ENCODE measurements at regions of chr14 and their contacts with region 1.

Region 1: DNA sequence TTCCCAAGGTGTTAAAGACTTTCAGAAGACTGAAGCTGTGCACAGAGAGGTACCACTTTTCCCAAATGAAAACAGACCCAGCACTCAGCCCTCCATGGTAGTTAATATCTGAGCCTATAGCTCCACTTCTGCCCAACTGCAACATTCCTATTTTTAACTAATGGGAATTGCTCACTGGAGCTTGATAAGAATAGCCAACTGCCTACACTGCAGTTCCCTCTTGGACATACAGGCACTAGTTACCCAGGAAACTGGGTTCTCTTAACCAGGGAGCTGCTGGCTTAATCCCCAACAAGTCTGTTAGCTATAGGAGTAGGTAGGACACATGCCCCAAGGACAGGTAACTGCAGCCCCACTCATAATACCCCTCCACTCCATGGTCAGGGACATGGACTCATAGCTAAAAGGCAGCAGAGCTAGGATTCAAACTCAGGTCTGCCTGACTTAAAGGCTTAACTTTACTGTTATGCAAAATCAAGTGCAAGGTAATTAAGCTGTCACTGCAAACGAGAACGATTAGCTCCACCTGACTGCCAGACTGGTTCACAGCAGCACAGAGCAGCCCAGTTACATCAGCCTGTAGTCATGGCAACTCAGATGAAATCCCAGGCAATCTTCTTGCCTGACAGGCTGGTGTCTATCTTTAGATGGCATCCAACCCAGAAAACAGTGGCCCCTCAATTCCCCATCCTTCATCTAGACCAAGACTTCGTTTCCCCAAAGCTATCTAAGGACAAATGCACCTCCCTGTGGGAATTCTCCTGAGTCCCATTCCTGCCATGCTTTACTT is 77.1 kb upstream of the ACTN1 start:
- DNase-seq: peak; percentile 49
- ATAC-seq: peak; percentile 92
- H3K4me3 Mint-ChIP-seq: no peak overlapping the region
- H3K27ac Mint-ChIP-seq: peak overlapping the region; percentile 54; the same call in 1 of the 2 replicates
- H3K4me1 Mint-ChIP-seq: peaks cover 21% of the 10 kb centered on the region
- H3K27me3 Mint-ChIP-seq: no peaks in the 10 kb centered on the region
- CTCF ChIP-seq: no peak

Region 2: DNA sequence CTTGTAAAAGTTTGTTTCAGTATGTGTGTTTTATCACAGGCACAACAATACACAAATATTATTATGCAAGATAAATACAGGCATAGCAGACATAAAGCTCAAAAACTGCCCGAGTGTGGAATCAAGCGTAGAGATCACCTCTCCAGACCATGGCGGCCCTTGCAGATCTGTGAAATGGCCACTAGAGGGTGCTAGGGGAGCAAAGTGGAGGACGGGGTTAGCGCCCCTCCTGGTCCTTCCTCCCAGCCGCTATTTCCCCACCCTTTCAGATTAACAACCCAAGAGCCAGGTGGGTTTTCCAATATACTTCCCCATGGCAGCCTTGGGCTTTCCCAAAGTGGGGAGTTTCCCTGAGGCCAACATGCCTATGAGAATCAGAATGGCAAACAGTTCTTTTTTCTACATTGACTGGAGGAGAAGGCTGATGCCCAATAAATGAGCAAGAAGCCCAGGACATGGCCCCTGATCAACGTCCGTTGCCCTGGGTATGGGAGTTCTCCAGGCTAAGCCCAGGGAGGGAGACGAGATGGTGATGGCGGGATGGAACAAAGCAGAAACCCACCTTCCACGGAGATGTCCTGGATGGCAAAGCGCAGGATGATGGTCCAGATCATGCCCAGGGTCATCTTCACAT is 144.5 kb before region 1 on chr14:
- CTCF ChIA-PET with region 1: interaction called, 17 read pairs
- POLR2A ChIA-PET with region 1: no interaction called
- DNase-seq: peak; percentile 89
- ATAC-seq: peak; percentile 94
- H3K4me3 Mint-ChIP-seq: no peak overlapping the region
- H3K27ac Mint-ChIP-seq: peak overlapping the region; percentile 60; the same call in 1 of the 2 replicates
- H3K4me1 Mint-ChIP-seq: no peaks in the 10 kb centered on the region; the same call in 1 of the 2 replicates
- H3K27me3 Mint-ChIP-seq: no peaks in the 10 kb centered on the region
- CTCF ChIP-seq: peak; percentile 99

Region 3: GRCh38 chr14:68979021-68979782 is 77.0 kb before region 1 on chr14 and contains the start of gene ACTN1:
- CTCF ChIA-PET with region 1: interaction called, 11 read pairs
- POLR2A ChIA-PET with region 1: interaction called, 3 read pairs
- DNase-seq: peak; percentile 92
- ATAC-seq: peak; percentile 78
- H3K4me3 Mint-ChIP-seq: peak within 1 kb of the TSS; percentile 90
- H3K27ac Mint-ChIP-seq: peak within 1 kb of the TSS; percentile 99
- H3K4me1 Mint-ChIP-seq: peaks cover 47% of the 10 kb centered on the region
- H3K27me3 Mint-ChIP-seq: peaks cover 7% of the 10 kb centered on the region
- CTCF ChIP-seq: no peak
- total RNA-seq, gene ACTN1: 196 to 198 TPM (median 197 TPM) in 3 replicates

Region 4: GRCh38 chr14:69090187-69090789 is 34.1 kb after region 1 on chr14:
- CTCF ChIA-PET with region 1: interaction called, 12 read pairs
- POLR2A ChIA-PET with region 1: no interaction called
- DNase-seq: peak; percentile 27
- ATAC-seq: peak; percentile 78
- H3K4me3 Mint-ChIP-seq: no peak overlapping the region
- H3K27ac Mint-ChIP-seq: no peak overlapping the region
- H3K4me1 Mint-ChIP-seq: peaks cover 14% of the 10 kb centered on the region
- H3K27me3 Mint-ChIP-seq: no peaks in the 10 kb centered on the region
- CTCF ChIP-seq: no peak; the same call in 1 of the 2 replicates